MCF 10A (cell line): ENCODE measurements at regions of chr2 and their contacts with region 1.

Region 1: GRCh38 chr2:44955593-44956392 is 14.3 kb downstream of the SIX3 start:
- DNase-seq: peak; percentile 69
- H3K4me3 Mint-ChIP-seq: peak overlapping the region; percentile 69
- H3K27ac Mint-ChIP-seq: no peak overlapping the region
- H3K4me1 Mint-ChIP-seq: peaks cover 21% of the 10 kb centered on the region
- H3K27me3 Mint-ChIP-seq: peaks cover 38% of the 10 kb centered on the region
- CTCF ChIP-seq: peak; percentile 98

Region 2: DNA sequence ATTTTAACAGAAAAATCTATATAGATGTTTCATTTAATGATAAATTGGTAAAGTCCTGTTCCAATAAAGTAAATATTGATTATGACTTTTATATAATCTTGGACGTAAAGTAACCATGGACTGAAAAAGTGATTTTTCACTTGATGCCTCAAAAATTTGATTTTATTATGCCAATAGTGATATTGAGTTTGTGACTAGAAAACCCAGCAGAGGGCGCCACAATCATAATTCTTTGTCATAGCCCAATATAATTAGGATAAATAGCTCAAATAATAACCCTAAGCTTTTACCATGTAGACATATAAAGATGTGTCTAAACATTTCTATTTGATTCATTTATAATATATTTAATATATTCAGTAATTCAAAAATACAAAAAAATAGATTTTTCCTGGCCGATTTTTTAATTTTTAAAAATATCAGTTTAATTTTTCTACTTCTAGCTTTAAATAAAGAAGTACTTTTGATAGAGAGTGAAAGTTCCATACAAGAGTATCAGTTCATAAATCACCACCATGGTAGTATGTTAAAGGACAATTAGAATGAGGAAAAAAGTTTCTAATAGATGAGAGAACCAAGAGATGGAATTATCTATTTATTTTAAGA is 563.4 kb before region 1 on chr2:
- CTCF ChIA-PET with region 1: interaction called, 206 read pairs
- POLR2A ChIA-PET with region 1: interaction called, 12 read pairs
- intact Hi-C with region 1: no loop called
- DNase-seq: peak; percentile 67
- H3K4me3 Mint-ChIP-seq: no peak overlapping the region
- H3K27ac Mint-ChIP-seq: no peak overlapping the region
- H3K4me1 Mint-ChIP-seq: no peaks in the 10 kb centered on the region
- H3K27me3 Mint-ChIP-seq: no peaks in the 10 kb centered on the region
- CTCF ChIP-seq: peak; percentile 58

Region 3: GRCh38 chr2:44560352-44560751 is 395.4 kb before region 1 on chr2:
- CTCF ChIA-PET with region 1: interaction called, 58 read pairs
- POLR2A ChIA-PET with region 1: no interaction called
- intact Hi-C with region 1: loop called (anchors 2 kb)
- DNase-seq: peak; percentile 45
- H3K4me3 Mint-ChIP-seq: no peak overlapping the region
- H3K27ac Mint-ChIP-seq: no peak overlapping the region
- H3K4me1 Mint-ChIP-seq: peaks cover 15% of the 10 kb centered on the region
- H3K27me3 Mint-ChIP-seq: no peaks in the 10 kb centered on the region
- CTCF ChIP-seq: peak; percentile 30

Region 4: GRCh38 chr2:44897406-44897805 is 58.4 kb before region 1 on chr2:
- CTCF ChIA-PET with region 1: interaction called, 4 read pairs
- POLR2A ChIA-PET with region 1: no interaction called
- intact Hi-C with region 1: loop called (anchors 5 kb)
- DNase-seq: peak; percentile 23
- H3K4me3 Mint-ChIP-seq: no peak overlapping the region
- H3K27ac Mint-ChIP-seq: no peak overlapping the region
- H3K4me1 Mint-ChIP-seq: no peaks in the 10 kb centered on the region
- H3K27me3 Mint-ChIP-seq: no peaks in the 10 kb centered on the region
- CTCF ChIP-seq: peak; percentile 15

Region 5: DNA sequence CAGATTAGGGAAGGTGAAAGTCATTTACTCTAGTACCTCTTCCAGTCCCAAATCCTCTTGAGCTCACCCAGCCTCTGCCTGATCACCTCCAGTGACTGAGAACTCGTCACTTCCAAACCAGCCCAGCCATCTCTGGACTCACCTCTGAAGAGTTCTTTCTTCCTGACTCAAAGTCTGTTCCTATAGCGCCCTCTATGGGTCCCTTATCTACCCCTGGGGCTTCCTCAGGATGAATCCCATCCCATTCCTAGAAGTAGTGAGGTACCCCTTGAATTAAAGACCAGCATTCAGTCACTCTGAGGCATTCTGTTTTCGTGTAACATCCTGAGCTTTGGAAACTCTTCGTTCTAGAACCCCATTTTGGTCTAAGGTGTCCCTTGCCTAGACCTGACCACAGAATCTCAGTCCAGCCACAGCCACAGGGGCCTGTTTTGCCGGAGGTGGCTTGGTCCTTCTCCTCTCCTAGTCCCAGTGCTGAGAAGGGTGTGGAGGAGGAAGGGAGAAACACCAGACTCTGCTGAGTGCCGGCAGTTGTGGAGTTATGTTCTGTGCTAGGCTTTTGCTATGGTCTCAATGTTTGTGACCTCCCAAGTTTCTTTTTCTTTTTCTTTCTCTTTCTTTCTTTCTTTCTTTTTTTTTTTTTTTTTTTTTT is 18.4 kb after region 1 on chr2:
- CTCF ChIA-PET with region 1: interaction called, 13 read pairs
- POLR2A ChIA-PET with region 1: no interaction called
- intact Hi-C with region 1: no loop called
- DNase-seq: peak; percentile 77
- H3K4me3 Mint-ChIP-seq: no peak overlapping the region
- H3K27ac Mint-ChIP-seq: no peak overlapping the region
- H3K4me1 Mint-ChIP-seq: peaks cover 5% of the 10 kb centered on the region
- H3K27me3 Mint-ChIP-seq: no peaks in the 10 kb centered on the region
- CTCF ChIP-seq: peak; percentile 63

Region 6: GRCh38 chr2:45009303-45009927 is 53.6 kb after region 1 on chr2 and contains the start of gene SIX2:
- CTCF ChIA-PET with region 1: no interaction called
- POLR2A ChIA-PET with region 1: no interaction called
- intact Hi-C with region 1: no loop called
- DNase-seq: peak; percentile 98
- H3K4me3 Mint-ChIP-seq: peak within 1 kb of the TSS; percentile 89
- H3K27ac Mint-ChIP-seq: peak within 1 kb of the TSS; percentile 40
- H3K4me1 Mint-ChIP-seq: peaks cover 7% of the 10 kb centered on the region
- H3K27me3 Mint-ChIP-seq: no peaks in the 10 kb centered on the region
- CTCF ChIP-seq: no peak
- total RNA-seq, gene SIX2: 0.96 and 1.2 TPM in 2 replicates